ENCODE measurements at regions of chr9 and their contacts with region 1.

Region 1: DNA sequence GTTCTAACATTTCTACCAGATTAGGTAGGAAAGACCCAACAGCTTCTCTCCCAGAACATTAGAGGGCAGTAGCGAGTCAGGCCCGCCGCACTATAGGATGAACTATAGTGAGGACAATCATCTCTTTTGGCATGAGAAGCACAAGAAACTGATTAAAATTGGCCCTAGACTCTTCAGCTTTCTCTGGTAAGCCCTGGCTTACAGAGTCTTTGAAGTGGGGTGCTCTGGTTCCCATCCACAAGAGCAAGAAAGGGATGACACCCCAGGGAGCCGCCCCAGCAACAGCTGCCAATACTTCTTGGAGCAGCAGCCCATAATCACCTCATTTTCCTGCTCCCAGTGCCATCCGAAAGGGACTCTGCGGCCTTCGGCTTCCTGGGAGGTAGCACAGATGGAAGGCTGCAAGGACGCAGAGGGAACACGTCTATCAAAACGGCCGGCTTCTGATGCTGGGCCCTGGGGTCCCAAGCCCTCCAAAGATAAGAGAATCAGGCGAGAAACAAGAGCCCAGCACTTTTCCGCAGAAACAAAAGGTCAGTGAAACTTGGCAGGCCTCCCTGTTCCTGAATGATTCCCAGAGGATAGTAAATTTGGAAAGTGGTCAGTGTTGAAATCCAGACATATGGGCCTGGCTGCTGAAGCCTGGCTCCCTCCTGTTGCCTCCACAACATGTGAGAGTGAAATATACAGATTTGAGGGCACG is 69.3 kb downstream of the HSD17B3 start:
- DNase-seq: peak; percentile 82
- ATAC-seq: peak; percentile 91

Region 2: GRCh38 chr9:96080364-96080763 is 152.3 kb before region 1 on chr9:
- intact Hi-C with region 1: no loop called
- DNase-seq: no peak
- ATAC-seq: no peak

Region 3: DNA sequence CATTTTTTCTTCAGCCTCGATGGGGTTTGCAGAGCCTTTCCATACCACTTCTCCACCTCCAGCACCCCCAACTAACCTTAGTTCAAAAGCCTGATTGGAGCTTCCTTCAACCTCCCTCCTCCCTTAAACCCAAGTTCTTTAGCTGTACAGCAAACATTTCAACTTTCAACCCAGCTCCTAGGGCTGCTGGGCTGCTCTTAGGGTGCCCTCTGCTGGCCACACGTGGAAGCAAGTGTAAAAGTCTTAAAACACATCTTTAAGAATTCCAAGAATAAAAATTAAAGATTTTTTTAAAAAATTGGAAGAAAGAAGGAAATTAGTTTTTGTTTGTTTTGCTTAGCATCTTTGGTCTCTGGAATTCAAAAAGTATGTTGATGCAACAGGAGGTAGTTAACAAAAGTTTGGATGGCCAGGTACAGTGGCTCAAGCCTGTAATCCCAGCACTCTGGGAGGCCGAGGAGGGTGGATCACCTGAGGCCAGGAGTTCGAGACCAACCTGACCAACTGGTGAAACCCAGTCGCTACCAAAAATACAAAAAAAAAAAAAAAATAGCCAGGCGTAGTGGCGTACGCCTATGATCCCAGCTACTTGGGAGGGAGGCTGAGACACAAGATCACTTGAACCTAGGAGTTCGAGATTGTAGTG is 84.8 kb after region 1 on chr9:
- intact Hi-C with region 1: loop called (anchors 2 kb)
- DNase-seq: peak; percentile 77
- ATAC-seq: peak; percentile 79

Region 4: DNA sequence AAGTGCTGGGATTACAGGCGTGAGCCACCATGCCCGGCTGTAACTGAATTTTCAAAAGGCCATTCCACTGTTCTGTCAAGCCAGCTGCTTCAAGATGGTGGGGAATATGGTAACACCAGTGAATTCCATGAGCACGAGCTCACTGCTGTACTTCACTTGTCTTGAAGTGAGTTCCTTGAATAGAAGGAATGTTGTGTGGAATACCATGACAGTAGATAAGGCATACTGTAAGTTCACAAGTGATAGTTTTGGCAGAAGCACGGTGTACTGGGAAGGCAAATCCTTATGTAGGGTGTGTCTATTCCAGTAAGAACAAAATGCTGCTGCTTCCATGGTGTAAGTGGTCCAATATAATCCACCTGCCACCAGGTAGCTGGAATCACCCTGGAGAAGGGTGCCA is 429.0 kb after region 1 on chr9:
- intact Hi-C with region 1: loop called (anchors 10 kb)
- DNase-seq: no peak
- ATAC-seq: no peak

Measured in Right ventricle myocardium superior (tissue), 1 donor.